ENCODE measurements at regions of chr9 and their contacts with region 1.

Region 1: DNA sequence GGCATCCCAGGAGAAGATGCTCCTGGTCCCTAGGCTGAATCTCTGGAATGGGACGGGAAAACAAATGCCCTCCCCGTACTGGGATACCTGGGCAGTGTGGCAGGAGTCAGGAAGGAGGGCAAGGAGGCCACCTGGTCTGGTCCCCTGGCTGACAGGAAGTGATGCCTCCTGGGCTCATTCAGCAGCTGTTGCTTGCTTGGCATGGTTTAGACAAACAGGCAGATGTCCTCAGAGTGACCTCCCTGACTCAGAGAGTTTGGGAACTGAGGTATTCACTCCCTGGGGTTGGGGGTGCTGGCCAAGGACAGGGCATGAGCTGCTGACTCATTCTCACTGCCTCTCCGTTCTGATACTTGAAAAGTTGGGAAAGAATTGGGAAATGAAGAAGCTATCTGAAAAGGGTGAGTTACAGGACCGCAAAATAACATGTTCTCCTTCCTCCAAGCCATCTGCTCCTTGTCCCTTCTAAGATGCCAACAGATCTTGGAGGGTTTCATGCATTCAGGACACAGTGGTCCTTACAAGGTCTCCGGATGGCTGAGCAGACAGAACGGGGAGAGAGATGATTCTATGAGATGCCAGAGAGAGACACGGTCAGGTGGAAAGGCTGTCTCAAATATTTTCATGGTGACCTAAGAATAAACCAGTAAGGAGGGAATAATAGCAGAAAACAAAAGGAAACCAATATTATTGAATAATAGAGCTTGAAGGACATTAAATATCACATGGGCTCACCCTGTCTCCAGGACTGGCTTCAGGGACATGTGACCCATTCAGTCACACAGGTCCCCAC is 534.5 kb downstream of the BNC2 start:
- DNase-seq: peak; percentile 75 to 85
- ATAC-seq: peak; percentile 86 to 91
- H3K4me3 ChIP-seq: no peak overlapping the region
- H3K27ac ChIP-seq: peak overlapping the region; percentile 47 to 68 (median 64)
- H3K4me1 ChIP-seq: peaks cover 5 to 7% of the 10 kb centered on the region in 2 donors
- H3K27me3 ChIP-seq: no peaks in the 10 kb centered on the region
- CTCF ChIP-seq: no peak
- POLR2A ChIP-seq: no peak

Region 2: DNA sequence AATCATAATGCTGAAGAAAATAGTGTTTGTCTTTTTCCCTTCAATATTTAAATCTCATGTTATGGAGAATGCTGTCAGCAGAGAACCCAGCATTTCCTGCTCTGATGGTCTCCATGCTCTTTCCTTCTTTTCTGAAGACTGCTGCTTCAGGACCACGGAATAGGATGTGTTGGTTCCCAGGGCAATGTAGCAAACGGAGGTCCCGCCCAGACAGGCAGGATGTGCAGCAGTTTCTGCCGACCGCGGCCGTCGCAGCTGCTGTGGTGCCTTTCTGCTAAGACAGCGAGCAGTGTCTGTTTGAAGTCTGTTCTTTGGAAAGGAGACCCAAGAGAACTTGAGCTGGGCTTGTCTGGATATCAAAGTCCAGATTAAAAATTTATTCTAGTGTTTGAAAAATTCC is 128.8 kb before region 1 on chr9:
- in situ Hi-C with region 1: loop called in 1 of 4 experiments (anchors 10 kb)
- intact Hi-C with region 1: no loop called
- DNase-seq: peak in 1 of 2 donors; percentile 25
- ATAC-seq: peak in 1 of 2 donors; percentile 41
- H3K4me3 ChIP-seq: no peak overlapping the region
- H3K27ac ChIP-seq: no peak overlapping the region
- H3K4me1 ChIP-seq: peaks cover 0 to 2% of the 10 kb centered on the region in 2 donors
- H3K27me3 ChIP-seq: no peaks in the 10 kb centered on the region
- CTCF ChIP-seq: no peak
- POLR2A ChIP-seq: no peak

Region 3: DNA sequence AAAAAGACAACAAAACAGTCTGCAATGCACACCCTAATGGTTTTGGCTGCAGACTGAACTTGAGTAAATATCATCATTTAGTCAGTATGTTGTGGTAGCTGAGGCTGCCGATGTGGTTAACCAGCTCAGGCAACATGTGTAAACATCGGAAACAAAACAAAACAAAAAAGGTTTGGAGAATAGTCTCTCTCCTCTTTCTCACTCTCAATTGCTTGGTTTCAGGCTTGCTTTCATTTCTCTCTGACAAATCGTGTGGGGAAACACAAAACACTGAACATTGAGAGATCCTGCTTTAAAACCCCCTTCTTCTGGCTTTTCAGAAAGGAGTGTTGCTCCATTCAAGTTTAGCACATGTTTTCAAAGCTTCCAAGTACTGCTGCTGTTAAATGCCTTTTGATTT is 81.2 kb after region 1 on chr9:
- in situ Hi-C with region 1: no loop called
- intact Hi-C with region 1: loop called (anchors 10 kb)
- DNase-seq: no peak
- ATAC-seq: peak in 1 of 2 donors; percentile 22
- H3K4me3 ChIP-seq: no peak overlapping the region
- H3K27ac ChIP-seq: peak overlapping the region in 3 of 4 donors; percentile 2 to 33 (median 8)
- H3K4me1 ChIP-seq: no peaks in the 10 kb centered on the region
- H3K27me3 ChIP-seq: no peaks in the 10 kb centered on the region
- CTCF ChIP-seq: no peak
- POLR2A ChIP-seq: no peak

Region 4: GRCh38 chr9:16705121-16705604 is 369.2 kb after region 1 on chr9:
- in situ Hi-C with region 1: loop called in 1 of 4 experiments (anchors 25 kb)
- intact Hi-C with region 1: no loop called
- DNase-seq: peak; percentile 40 to 70
- ATAC-seq: peak; percentile 83 to 88
- H3K4me3 ChIP-seq: peak overlapping the region; percentile 18 to 51 (median 30)
- H3K27ac ChIP-seq: peak overlapping the region; percentile 71 to 83 (median 80)
- H3K4me1 ChIP-seq: peaks cover 5 to 11% of the 10 kb centered on the region in 2 donors
- H3K27me3 ChIP-seq: no peaks in the 10 kb centered on the region
- CTCF ChIP-seq: no peak
- POLR2A ChIP-seq: no peak